H1 (cell line): ENCODE measurements at regions of chr9 and their contacts with region 1.

Region 1: DNA sequence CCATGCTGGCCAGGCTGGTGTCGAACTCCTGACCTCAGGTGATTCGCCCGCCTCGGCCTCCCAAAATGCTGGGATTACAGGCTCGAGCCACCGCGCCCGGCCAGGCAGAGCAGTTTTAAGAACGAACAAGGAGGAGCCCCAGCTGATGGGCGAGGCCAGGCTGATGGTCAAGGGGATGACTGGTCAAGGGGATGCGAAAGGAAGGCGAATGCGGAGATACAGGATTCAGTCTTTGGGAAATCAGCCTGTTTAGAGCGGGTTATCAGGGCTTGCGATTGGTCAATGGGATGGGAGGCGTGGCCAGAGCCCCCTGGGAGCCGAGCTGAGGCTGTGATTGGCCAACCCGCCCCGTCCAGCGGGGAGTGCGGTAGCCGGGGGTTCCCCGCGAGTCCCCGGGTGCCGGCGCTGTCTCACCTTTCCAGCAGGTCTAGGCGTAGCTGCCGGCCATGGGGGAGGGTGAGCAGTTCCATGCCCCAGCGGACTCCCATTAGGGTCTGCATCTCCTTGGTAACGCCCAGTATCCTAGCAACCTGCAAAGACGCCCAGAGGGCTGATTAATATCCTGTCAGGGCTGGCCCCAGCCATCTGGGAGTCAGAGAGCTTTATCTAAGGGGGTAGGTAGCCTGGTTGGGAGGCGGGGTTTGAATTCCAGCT is 7.5 kb upstream of the TOR2A start:
- DNase-seq: peak; percentile 91 to 96
- H3K4me3 ChIP-seq: peak overlapping the region; percentile 32 to 67 (median 47)
- H3K27ac ChIP-seq: no peak overlapping the region; the same call in 1 of the 2 replicates
- H3K4me1 ChIP-seq: no peaks in the 10 kb centered on the region; a peak in 2 of 7 replicates
- H3K27me3 ChIP-seq: no peaks in the 10 kb centered on the region
- CTCF ChIP-seq: no peak
- EP300 ChIP-seq: no peak
- POLR2A ChIP-seq: no peak
- RAD21 ChIP-seq: peak; percentile 8 to 10; a peak in 2 of 4 replicates

Region 2: GRCh38 chr9:127754099-127755050 is 11.8 kb after region 1 on chr9:
- CTCF ChIA-PET with region 1: interaction called, 6 read pairs
- POLR2A ChIA-PET with region 1: interaction called, 12 read pairs
- DNase-seq: peak in 1 of 2 experiments; percentile 90
- H3K4me3 ChIP-seq: peak overlapping the region; percentile 59 to 96 (median 76)
- H3K27ac ChIP-seq: no peak overlapping the region; the same call in 1 of the 2 replicates
- H3K4me1 ChIP-seq: peaks cover 0 to 4% (median 1%) of the 10 kb centered on the region in 4 experiments; a peak in 4 of 7 replicates
- H3K27me3 ChIP-seq: peaks cover 0 to 16% (median 8%) of the 10 kb centered on the region in 4 experiments; a peak in 6 of 7 replicates
- CTCF ChIP-seq: no peak
- EP300 ChIP-seq: no peak
- POLR2A ChIP-seq: peak in 1 of 2 experiments; percentile 29; a peak in 1 of 3 replicates
- RAD21 ChIP-seq: no peak

Region 3: GRCh38 chr9:127763918-127764384 is 21.4 kb after region 1 on chr9:
- CTCF ChIA-PET with region 1: interaction called, 10 read pairs
- POLR2A ChIA-PET with region 1: interaction called, 3 read pairs
- DNase-seq: peak in 1 of 2 experiments; percentile 85
- H3K4me3 ChIP-seq: 0 out of 8 replicates have a peak overlapping the region, but pooled peaks of 1 of the 4 experiments have one; percentile 0
- H3K27ac ChIP-seq: no peak overlapping the region
- H3K4me1 ChIP-seq: peaks cover 0 to 20% (median 14%) of the 10 kb centered on the region in 4 experiments; a peak in 6 of 7 replicates
- H3K27me3 ChIP-seq: no peaks in the 10 kb centered on the region
- CTCF ChIP-seq: peak; percentile 76 to 89 (median 77)
- EP300 ChIP-seq: no peak
- POLR2A ChIP-seq: no peak
- RAD21 ChIP-seq: peak; percentile 77 to 78

Region 4: DNA sequence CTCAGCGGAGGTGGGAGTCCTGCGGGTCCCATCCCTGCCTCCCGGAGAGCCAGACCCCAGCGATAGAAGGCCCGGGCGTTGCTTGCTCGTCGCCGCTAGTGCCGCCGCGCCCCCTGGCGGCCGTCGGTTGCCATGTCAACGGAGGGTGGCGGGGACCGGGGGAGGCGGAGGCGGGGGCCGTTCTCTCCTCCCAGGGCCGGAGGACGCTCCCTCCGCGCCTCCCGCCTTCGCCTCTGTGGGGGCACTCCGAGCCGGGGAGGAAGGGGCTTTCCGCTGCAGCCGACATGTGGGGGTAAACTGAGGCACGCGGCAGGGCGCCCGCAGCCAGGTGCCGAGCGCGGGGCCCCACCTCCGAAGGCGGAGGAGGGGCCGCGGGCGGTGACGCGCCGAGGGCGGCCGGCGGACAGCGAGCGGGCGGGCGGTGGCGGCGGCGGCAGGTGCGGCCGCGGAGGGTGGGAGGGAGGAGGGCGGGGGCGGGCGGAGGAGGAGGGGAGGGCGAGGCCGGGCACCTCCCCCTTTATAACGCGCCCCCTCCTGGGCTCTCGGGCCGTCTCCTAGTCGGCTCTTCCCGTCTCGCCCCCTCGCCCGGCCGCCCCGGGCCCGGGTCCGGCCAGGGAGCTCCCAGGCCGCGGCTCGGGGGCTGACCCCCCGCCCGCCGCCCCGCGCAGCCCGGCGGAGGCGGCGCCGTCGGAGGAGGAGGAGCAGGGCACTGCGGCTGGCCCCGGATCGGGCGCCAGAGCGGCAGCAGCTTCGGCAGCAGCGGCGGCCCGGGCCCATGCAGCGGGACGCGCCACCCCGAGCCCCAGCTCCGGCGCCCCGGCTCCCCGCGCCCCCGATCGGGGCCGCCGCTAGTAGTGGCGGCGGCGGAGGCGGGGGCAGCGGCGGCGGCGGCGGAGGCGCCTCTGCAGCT is 42.7 kb after region 1 on chr9:
- CTCF ChIA-PET with region 1: interaction called, 37 read pairs
- POLR2A ChIA-PET with region 1: interaction called, 4 read pairs
- DNase-seq: peak in 1 of 2 experiments; percentile 95
- H3K4me3 ChIP-seq: peak overlapping the region; percentile 43 to 100 (median 57)
- H3K27ac ChIP-seq: peak overlapping the region; percentile 62; the same call in 1 of the 2 replicates
- H3K4me1 ChIP-seq: peaks cover 0 to 6% (median 3%) of the 10 kb centered on the region in 4 experiments; a peak in 4 of 7 replicates
- H3K27me3 ChIP-seq: no peaks in the 10 kb centered on the region
- CTCF ChIP-seq: peak in 2 of 3 experiments; percentile 65 to 91; a peak in 3 of 4 replicates
- EP300 ChIP-seq: 0 out of 3 replicates have a peak, but pooled peaks of 1 of the 2 experiments have one; percentile 40
- POLR2A ChIP-seq: no peak
- RAD21 ChIP-seq: peak; percentile 77 to 84

Region 5: DNA sequence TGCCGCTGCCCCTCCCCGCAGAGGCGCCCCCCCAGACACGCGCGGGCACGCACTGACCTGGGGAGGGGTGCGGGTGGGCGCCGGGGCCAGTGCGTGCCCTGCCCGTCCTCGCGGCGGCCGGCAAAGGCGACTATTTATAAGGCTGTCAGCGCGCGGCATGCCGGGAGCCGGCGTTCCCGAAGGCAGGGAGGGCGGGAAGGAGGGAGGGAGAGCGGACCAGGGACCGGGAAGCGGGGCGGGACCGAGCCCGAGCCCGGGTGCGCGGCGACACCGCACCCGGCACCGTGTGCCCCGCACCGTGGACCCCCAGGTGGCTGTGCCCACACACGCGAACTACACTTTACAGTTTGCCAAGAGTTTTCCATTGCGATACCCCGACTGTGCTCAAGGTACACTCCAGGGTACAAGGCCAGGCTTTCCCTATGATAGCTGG is 135.0 kb after region 1 on chr9 and contains the start of gene AK1:
- CTCF ChIA-PET with region 1: no interaction called
- POLR2A ChIA-PET with region 1: no interaction called
- DNase-seq: peak in 1 of 2 experiments; percentile 84
- H3K4me3 ChIP-seq: peak within 1 kb of the TSS; percentile 46 to 66 (median 58)
- H3K27ac ChIP-seq: no peak within 1 kb of the TSS
- H3K4me1 ChIP-seq: peaks cover 0 to 10% (median 7%) of the 10 kb centered on the region in 4 experiments; a peak in 6 of 7 replicates
- H3K27me3 ChIP-seq: no peaks in the 10 kb centered on the region
- CTCF ChIP-seq: no peak
- EP300 ChIP-seq: no peak
- POLR2A ChIP-seq: peak in 1 of 2 experiments; percentile 52; a peak in 1 of 3 replicates
- RAD21 ChIP-seq: no peak
- total RNA-seq, gene AK1: 35.9 and 37.9 TPM in 2 replicates